ENCODE measurements at regions of chr10 and their contacts with region 1.

Region 1: DNA sequence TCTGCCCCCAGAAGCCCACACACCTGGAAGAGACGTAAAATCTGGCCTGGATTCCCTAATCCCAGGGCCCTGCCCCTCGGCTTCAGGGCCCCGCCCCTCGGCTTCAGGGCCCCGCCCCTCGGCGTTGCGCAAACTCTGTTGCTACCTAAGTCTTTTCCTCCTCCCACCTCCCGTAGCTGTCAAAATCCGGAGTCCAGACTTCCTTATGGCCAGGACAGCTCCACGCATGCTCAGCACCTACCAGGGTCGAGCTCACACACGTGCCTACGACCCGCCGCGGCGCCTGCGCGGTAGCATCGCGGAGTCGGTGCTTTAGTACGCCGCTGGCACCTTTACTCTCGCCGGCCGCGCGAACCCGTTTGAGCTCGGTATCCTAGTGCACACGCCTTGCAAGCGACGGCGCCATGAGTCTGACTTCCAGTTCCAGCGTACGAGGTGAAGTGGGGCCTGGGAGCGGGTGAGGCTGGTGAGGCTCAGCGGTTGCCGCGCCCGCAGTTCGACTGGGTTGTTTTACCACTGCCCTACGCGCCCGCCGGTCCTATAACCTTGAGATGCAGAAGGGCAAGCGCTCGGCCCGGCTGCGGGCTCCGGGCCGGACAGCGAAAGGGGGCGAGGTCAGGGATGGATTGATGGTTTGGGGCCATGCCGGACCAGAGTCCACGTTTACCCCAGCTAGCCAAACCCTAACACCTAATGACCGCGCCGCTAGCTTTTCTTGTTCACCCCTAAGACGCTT is at the start of gene CISD1:
- DNase-seq: peak; percentile 99
- ATAC-seq: peak; percentile 80
- H3K4me3 ChIP-seq: peak within 1 kb of the TSS; percentile 74 to 88 (median 83)
- H3K27ac ChIP-seq: peak within 1 kb of the TSS; percentile 92
- H3K4me1 ChIP-seq: peaks cover 35% of the 10 kb centered on the region
- H3K27me3 ChIP-seq: no peaks in the 10 kb centered on the region; a peak in 1 of 5 replicates
- CTCF ChIP-seq: no peak; the same call in 1 of the 2 replicates
- EP300 ChIP-seq: 0 out of 4 replicates have a peak, but pooled peaks of 1 of the 2 experiments have one; percentile 15
- POLR2A ChIP-seq: peak; percentile 80 to 87
- RAD21 ChIP-seq: no peak
- total RNA-seq, gene CISD1: 78.9 and 92.2 TPM in 2 replicates

Region 2: DNA sequence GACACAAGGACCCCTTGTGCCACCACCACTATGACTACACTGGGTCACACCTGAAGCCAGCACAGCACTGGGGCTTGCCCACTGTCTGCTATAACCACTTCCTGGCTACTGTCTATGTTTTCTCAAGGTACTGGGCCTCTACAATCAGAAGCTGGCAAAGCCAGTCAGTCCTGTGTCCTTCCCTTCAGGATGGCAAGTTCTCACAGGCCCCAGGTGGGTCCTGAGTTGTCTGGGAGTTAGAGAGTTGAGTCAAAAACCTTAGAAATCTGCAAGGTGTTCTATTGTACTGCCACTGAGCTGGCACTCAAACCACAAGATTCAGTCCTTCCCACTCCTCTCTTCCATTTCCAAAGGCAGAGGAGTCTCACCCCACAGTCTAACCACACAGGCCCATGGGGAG is 706.8 kb before region 1 on chr10:
- CTCF ChIA-PET with region 1: no interaction called
- POLR2A ChIA-PET with region 1: no interaction called
- in situ Hi-C with region 1: no loop called
- intact Hi-C with region 1: no loop called
- DNase-seq: no peak
- ATAC-seq: no peak
- H3K4me3 ChIP-seq: no peak overlapping the region
- H3K27ac ChIP-seq: no peak overlapping the region
- H3K4me1 ChIP-seq: no peaks in the 10 kb centered on the region
- H3K27me3 ChIP-seq: no peaks in the 10 kb centered on the region; a peak in 1 of 5 replicates
- CTCF ChIP-seq: no peak
- EP300 ChIP-seq: no peak
- POLR2A ChIP-seq: no peak
- RAD21 ChIP-seq: no peak

Region 3: GRCh38 chr10:58137813-58138212 is 131.2 kb before region 1 on chr10:
- CTCF ChIA-PET with region 1: no interaction called
- POLR2A ChIA-PET with region 1: no interaction called
- in situ Hi-C with region 1: no loop called
- intact Hi-C with region 1: no loop called
- DNase-seq: no peak
- ATAC-seq: no peak
- H3K4me3 ChIP-seq: no peak overlapping the region
- H3K27ac ChIP-seq: no peak overlapping the region
- H3K4me1 ChIP-seq: no peaks in the 10 kb centered on the region
- H3K27me3 ChIP-seq: 0 out of 5 replicates have a peak, but pooled peaks cover 0 to 3% of the 10 kb centered on the region in 2 experiments
- CTCF ChIP-seq: no peak
- EP300 ChIP-seq: no peak
- POLR2A ChIP-seq: no peak
- RAD21 ChIP-seq: no peak

Region 4: DNA sequence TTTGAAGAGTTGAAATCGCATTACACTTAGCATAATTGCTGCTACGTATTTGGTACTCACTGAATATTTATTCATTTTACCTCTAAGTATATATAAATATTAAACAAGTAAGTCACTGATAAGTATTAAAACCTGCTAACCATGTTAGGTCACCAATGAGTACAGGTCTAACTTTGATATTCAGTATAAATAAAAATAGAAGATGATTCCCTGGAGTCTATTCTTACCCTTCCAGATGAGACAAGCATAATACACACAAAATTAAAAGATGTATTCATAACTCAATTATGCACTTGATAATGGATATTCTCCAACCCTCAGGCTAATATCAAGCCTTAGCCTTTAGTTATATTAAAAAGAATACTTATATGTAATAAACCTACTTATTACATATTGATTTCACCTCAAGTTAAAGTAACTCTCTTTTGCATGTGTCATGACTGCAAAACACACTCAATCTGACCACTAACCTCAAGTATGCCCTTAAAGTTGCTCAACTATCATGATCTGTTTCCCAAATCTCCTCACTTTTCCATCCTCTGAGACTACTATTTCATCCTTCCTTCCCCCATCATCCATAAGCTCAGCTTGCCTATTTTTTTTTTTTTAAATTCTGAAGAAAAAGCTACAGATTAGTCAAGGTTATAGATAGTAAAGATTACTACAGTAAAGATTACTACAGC is 48.1 kb before region 1 on chr10:
- CTCF ChIA-PET with region 1: no interaction called
- POLR2A ChIA-PET with region 1: interaction called, 3 read pairs
- in situ Hi-C with region 1: no loop called
- intact Hi-C with region 1: loop called (anchors 5 kb)
- DNase-seq: no peak
- ATAC-seq: no peak
- H3K4me3 ChIP-seq: no peak overlapping the region
- H3K27ac ChIP-seq: no peak overlapping the region
- H3K4me1 ChIP-seq: peaks cover 3% of the 10 kb centered on the region
- H3K27me3 ChIP-seq: no peaks in the 10 kb centered on the region; a peak in 1 of 5 replicates
- CTCF ChIP-seq: no peak
- EP300 ChIP-seq: no peak
- POLR2A ChIP-seq: no peak
- RAD21 ChIP-seq: no peak

Region 5: DNA sequence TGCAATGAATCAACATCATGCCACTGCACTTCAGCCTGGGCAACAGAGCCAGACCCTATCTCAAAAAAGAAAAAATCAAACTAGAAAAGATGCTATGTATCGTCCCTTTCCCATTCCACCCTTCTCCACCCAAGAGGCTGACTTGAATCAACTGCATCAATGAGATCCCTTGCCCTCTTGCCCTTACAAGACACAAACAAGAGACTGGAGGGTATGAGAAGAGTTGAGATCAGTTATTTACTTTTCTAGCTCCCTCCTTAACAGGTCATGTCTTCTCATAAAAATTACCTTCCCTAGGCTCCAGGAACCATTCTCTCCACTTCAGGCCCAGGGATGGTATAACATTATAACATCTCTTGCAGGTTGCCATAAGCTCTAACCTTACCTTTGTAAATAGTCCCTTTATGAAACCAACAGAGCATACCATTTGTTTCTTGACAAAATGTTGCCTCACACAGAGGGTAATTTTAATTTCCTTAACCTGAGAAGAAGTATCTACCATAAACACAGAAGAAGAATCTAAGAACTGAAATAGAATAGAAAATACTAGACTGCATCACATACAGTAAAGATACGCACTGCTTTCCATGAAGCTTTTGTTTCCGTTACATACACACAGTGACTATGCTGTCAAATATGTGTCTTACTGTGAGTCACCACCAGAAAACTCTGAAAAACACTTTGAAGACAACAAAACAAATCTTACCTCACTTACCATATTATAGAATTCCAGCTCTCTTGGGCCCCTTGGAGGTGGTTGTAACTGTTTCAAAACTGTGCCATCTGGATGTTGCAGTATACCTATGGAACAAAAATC is 31.8 kb before region 1 on chr10:
- CTCF ChIA-PET with region 1: no interaction called
- POLR2A ChIA-PET with region 1: interaction called, 33 read pairs
- in situ Hi-C with region 1: no loop called
- intact Hi-C with region 1: no loop called
- DNase-seq: peak; percentile 78
- ATAC-seq: peak; percentile 80
- H3K4me3 ChIP-seq: no peak overlapping the region
- H3K27ac ChIP-seq: peak overlapping the region; percentile 5
- H3K4me1 ChIP-seq: peaks cover 55% of the 10 kb centered on the region
- H3K27me3 ChIP-seq: no peaks in the 10 kb centered on the region
- CTCF ChIP-seq: no peak
- EP300 ChIP-seq: peak in 1 of 2 experiments; percentile 57; a peak in 2 of 4 replicates
- POLR2A ChIP-seq: no peak
- RAD21 ChIP-seq: no peak

Region 6: GRCh38 chr10:58291538-58292174 is 22.6 kb after region 1 on chr10:
- CTCF ChIA-PET with region 1: no interaction called
- POLR2A ChIA-PET with region 1: interaction called, 10 read pairs
- in situ Hi-C with region 1: no loop called
- intact Hi-C with region 1: loop called (anchors 1 kb)
- DNase-seq: peak; percentile 21
- ATAC-seq: peak; percentile 80
- H3K4me3 ChIP-seq: no peak overlapping the region
- H3K27ac ChIP-seq: no peak overlapping the region
- H3K4me1 ChIP-seq: no peaks in the 10 kb centered on the region
- H3K27me3 ChIP-seq: no peaks in the 10 kb centered on the region; a peak in 1 of 5 replicates
- CTCF ChIP-seq: peak; percentile 75
- EP300 ChIP-seq: no peak
- POLR2A ChIP-seq: no peak
- RAD21 ChIP-seq: peak; percentile 70

Region 7: DNA sequence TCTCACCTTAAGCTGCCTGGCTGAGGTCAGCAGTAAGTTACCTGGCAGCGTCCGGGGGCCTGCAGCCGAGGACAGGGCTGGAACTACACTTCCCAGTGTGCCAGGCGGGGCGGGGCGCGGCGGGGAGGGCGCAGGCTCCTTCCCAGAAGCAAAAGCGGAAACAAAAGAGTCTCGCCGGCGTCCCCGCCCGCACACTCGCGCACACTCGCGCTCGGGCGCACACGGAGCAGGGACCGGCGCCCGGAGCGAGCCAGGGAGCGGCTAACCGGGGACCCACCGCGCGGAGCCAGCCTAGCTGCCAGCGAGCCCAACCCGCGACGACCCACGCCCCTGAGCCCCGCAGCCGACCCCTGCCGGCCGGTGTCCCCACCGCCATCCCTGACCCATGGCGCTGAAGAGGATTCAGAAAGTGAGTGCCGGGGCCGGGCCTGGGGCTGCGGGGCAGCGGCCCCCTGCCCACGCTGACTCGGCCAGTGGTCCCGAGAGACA is 65.8 kb after region 1 on chr10 and contains the start of gene UBE2D1:
- CTCF ChIA-PET with region 1: no interaction called
- POLR2A ChIA-PET with region 1: interaction called, 6 read pairs
- in situ Hi-C with region 1: no loop called
- intact Hi-C with region 1: loop called (anchors 2 kb)
- DNase-seq: peak; percentile 63
- ATAC-seq: peak; percentile 97
- H3K4me3 ChIP-seq: peak within 1 kb of the TSS; percentile 81 to 99 (median 90)
- H3K27ac ChIP-seq: peak within 1 kb of the TSS; percentile 41
- H3K4me1 ChIP-seq: peaks cover 18% of the 10 kb centered on the region
- H3K27me3 ChIP-seq: peaks cover 0 to 3% of the 10 kb centered on the region in 2 experiments; a peak in 1 of 5 replicates
- CTCF ChIP-seq: peak; percentile 42; the same call in 1 of the 2 replicates
- EP300 ChIP-seq: no peak
- POLR2A ChIP-seq: peak; percentile 82 to 98
- RAD21 ChIP-seq: peak; percentile 55; the same call in 1 of the 2 replicates
- total RNA-seq, gene UBE2D1: 6.2 and 7.9 TPM in 2 replicates